ENCODE measurements at regions of chr1 and their contacts with region 1.

Region 1: DNA sequence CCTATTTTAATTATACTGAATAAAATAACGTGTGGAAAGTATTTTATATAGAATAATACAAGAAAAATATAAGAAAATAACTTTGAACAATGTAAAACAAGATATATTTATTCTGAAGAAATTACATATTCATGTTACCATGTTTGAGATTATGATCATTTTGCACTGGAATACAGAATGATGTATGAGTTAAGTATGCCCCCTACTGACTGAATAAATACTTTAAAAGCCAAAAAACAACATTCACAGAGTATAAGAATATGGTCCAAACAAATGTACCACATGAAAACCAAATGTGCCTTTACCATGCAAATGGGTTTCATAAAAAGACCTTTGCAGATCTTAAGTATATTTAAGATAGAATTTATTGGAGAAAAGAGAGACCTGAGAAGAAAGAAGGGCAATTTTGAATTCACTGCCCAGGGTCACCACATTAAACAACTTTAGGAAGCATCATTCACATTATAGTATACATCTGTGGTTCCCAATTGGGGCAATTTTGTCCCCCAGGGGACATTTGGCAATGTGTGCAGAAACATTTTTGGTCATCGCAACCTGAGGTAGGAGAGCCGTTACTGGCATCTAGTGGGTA is 136.6 kb upstream of the GFI1 start:
- H3K4me3 Mint-ChIP-seq: no peak overlapping the region
- H3K27ac Mint-ChIP-seq: no peak overlapping the region
- H3K4me1 Mint-ChIP-seq: no peaks in the 10 kb centered on the region
- H3K27me3 Mint-ChIP-seq: no peaks in the 10 kb centered on the region

Region 2: GRCh38 chr1:91997607-91998195 is 625.6 kb before region 1 on chr1:
- intact Hi-C with region 1: loop called (anchors 10 kb)
- H3K4me3 Mint-ChIP-seq: no peak overlapping the region
- H3K27ac Mint-ChIP-seq: no peak overlapping the region
- H3K4me1 Mint-ChIP-seq: no peaks in the 10 kb centered on the region
- H3K27me3 Mint-ChIP-seq: no peaks in the 10 kb centered on the region

Measured in dendritic cell treated with granulocyte-macrophage colony-stimulating factor and Interleukin-4, amounts not matched to agents 40 ng/mL and 50 ng/mL, for 4 days (primary cell).